ENCODE measurements at regions of chr21 and their contacts with region 1.

Region 1: DNA sequence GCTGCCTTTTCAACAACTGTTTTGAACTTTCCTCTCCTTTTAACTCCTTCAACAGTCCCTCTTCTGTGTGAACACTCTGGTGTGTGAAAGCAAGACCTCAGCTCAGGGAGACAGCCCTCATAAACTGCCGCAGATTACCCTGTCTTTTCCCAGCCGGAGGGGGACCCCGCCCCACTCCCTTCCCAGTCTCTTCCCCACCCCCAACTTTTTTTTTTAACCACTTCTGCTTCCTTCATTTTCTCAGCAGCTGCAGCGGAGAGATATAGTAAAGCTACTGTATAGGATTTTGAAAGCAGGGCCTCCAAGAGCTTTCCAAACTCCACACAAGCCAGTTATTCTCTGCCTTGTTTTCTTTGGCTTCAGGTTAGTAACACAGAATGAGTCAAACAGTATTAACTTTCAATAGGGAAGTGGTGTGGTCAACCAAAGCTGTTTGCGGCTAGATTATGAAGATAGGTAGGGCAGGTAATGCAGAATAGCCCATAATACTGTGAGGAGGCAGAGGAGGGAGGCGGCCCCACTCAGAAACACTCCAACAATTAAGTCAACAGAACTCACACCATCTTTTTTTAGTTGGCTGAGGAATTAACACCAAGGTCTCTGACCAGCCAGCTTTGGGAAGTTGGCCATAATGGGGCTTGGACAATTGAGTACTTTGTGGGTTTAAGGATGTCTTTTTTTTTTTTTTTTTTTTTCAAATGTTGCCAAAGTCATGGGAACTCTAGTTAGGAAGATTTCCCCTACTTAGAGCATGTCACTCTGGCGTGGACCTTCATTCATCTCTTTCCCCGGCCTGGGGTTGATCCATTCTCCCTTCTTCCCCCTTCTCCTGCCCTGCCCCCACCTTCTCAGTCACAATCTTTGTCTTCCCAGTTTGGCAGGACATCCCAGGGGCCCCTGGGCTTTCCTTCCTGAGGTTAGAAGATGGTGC is 177.0 kb downstream of the CLIC6 start:
- DNase-seq: no peak
- ATAC-seq: peak; percentile 74
- H3K4me3 Mint-ChIP-seq: peak overlapping the region; percentile 52
- H3K27ac Mint-ChIP-seq: peak overlapping the region; percentile 64
- H3K4me1 Mint-ChIP-seq: peaks cover 36% of the 10 kb centered on the region
- H3K27me3 Mint-ChIP-seq: no peaks in the 10 kb centered on the region
- CTCF ChIP-seq: no peak

Region 2: GRCh38 chr21:34807146-34807880 is 38.5 kb before region 1 on chr21:
- CTCF ChIA-PET with region 1: no interaction called
- POLR2A ChIA-PET with region 1: interaction called, 3 read pairs
- intact Hi-C with region 1: loop called (anchors 2 kb)
- DNase-seq: no peak
- ATAC-seq: peak; percentile 83
- H3K4me3 Mint-ChIP-seq: no peak overlapping the region
- H3K27ac Mint-ChIP-seq: peak overlapping the region; percentile 71
- H3K4me1 Mint-ChIP-seq: peaks cover 48% of the 10 kb centered on the region
- H3K27me3 Mint-ChIP-seq: no peaks in the 10 kb centered on the region
- CTCF ChIP-seq: no peak

Region 3: GRCh38 chr21:34874684-34875513 is 29.1 kb after region 1 on chr21:
- CTCF ChIA-PET with region 1: no interaction called
- POLR2A ChIA-PET with region 1: interaction called, 15 read pairs
- intact Hi-C with region 1: no loop called
- DNase-seq: no peak
- ATAC-seq: peak; percentile 90
- H3K4me3 Mint-ChIP-seq: peak overlapping the region; percentile 79
- H3K27ac Mint-ChIP-seq: peak overlapping the region; percentile 91
- H3K4me1 Mint-ChIP-seq: peaks cover 32% of the 10 kb centered on the region
- H3K27me3 Mint-ChIP-seq: no peaks in the 10 kb centered on the region
- CTCF ChIP-seq: no peak